Transverse colon (tissue), 4 donors: ENCODE measurements at regions of chr13 and their contacts with region 1.

Region 1: DNA sequence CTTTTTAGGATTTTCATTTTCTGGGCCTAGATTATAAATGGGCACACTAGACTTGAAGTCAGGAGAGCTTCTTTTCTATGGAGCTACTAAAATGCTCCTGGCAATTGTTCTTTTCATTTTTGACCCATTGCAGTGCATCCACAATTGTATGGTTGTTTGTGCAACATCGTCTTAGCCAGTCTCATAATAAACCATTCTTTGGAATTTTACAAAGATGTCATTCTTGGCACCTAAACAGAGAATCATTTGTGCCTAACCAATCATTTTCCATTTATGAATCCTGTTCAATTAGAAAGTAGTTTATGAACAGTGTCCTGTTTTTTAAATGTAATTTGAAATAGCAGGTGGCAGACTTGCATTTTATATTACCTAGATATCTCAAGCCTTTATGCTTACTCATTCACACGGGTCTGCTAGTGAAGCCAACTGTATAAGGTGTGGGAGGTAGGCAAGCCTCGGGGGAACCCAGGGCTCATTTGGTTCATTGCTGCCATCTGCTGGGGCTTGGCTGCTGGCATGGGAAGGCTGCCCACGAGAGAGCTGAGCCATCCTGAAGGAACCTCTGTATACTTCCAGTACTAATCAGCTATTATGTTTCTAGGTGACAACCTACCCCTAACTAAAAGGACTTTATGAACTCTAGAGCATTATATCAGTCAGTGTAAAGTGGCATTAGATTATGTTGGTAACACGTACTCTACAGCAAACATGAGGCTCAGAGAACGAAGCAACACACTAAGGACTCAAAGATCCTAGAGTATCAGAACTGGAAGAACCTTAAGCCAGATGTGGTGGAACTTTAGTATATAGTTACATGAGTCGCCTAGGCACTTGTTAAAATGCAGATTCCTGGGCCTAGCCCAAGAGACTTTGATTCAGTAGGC is 60.0 kb downstream of the TPT1 start:
- DNase-seq: peak; percentile 83
- H3K4me3 ChIP-seq: no peak overlapping the region
- H3K27ac ChIP-seq: no peak overlapping the region
- H3K4me1 ChIP-seq: peaks cover 0 to 15% (median 2%) of the 10 kb centered on the region in 4 donors
- H3K27me3 ChIP-seq: no peaks in the 10 kb centered on the region
- CTCF ChIP-seq: peak; percentile 66 to 81 (median 74)
- EP300 ChIP-seq: no peak
- POLR2A ChIP-seq: no peak

Region 2: DNA sequence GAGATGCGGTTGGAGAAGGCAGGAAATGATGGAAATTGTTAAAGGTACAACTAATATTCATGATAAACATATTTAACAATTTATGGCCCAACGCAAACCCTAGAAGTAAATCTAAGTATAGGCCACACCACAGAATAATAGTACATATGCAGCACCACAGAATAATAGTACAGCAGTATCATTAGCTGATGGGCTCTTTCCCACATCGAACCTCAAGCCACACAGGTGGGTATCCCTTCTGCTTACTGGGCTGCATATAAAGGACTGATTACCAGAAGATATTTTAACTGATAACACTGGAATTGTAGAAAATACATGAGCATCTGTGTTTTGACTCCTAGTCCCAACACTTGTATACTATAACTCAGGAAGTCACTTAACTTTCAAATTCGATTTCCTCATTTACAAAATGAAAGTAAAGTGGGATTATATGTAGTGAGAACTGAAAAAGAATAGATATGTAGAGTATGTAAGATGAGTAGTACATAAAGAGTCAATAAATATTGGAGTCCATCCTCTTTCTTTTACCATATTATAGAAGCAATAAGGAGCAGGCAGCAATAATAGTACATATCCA is 796.3 kb before region 1 on chr13:
- in situ Hi-C with region 1: no loop called
- intact Hi-C with region 1: no loop called
- DNase-seq: no peak
- H3K4me3 ChIP-seq: no peak overlapping the region
- H3K27ac ChIP-seq: no peak overlapping the region
- H3K4me1 ChIP-seq: peaks cover 0 to 10% (median 3%) of the 10 kb centered on the region in 4 donors
- H3K27me3 ChIP-seq: no peaks in the 10 kb centered on the region
- CTCF ChIP-seq: no peak
- EP300 ChIP-seq: no peak
- POLR2A ChIP-seq: no peak

Region 3: DNA sequence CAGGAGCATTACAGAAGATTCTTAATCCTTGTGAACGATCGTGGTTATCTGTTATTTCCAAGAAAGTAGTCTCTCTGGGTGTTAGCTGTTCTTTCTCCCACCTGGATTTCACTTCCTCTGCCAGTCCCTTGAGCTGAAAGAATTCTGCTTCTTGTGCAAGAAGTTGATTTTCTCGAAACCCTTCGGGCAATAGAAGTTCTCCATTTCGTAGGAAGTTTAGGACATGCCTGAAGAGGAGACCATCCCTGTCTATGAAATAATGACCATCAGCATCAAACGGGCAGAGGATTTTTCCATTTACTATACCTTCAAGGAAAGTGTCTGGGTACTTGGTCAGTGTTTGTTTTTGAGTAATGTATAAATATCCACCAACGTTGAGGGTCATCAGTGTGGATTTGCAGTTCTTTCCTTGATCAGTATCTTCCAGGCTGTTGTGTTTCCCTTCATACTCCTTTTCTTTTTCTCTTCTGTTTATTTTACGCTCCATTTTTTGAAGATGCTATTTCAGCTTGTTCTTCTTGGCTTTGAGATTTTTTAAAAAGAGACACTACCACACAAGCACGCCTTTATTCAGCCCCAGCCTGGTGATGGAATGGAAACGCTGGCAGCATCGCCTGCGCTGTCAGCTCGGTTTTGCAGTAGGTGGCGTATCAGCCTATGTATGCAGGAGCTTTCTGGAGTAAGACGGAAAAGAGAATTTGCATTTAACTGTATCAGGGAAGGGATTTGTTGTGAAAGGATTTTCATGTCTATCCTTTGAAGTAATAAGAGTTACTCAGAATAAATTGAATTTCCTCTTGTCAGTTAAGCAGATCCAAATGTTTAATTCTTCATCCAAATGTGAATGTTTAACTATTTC is 86.7 kb before region 1 on chr13:
- in situ Hi-C with region 1: no loop called
- intact Hi-C with region 1: loop called (anchors 10 kb)
- DNase-seq: peak; percentile 23
- H3K4me3 ChIP-seq: no peak overlapping the region
- H3K27ac ChIP-seq: no peak overlapping the region
- H3K4me1 ChIP-seq: peaks cover 0 to 20% (median 7%) of the 10 kb centered on the region in 4 donors
- H3K27me3 ChIP-seq: no peaks in the 10 kb centered on the region
- CTCF ChIP-seq: peak in 3 of 5 experiments; percentile 17 to 41 (median 19)
- EP300 ChIP-seq: no peak
- POLR2A ChIP-seq: no peak